RWPE1 (cell line): ENCODE measurements at regions of chr20 and their contacts with region 1.

Region 1: GRCh38 chr20:38221119-38221589 is 39.4 kb downstream of the KIAA1755 start:
- DNase-seq: peak; percentile 94
- H3K27ac ChIP-seq: no peak overlapping the region
- CTCF ChIP-seq: peak; percentile 99

Region 2: DNA sequence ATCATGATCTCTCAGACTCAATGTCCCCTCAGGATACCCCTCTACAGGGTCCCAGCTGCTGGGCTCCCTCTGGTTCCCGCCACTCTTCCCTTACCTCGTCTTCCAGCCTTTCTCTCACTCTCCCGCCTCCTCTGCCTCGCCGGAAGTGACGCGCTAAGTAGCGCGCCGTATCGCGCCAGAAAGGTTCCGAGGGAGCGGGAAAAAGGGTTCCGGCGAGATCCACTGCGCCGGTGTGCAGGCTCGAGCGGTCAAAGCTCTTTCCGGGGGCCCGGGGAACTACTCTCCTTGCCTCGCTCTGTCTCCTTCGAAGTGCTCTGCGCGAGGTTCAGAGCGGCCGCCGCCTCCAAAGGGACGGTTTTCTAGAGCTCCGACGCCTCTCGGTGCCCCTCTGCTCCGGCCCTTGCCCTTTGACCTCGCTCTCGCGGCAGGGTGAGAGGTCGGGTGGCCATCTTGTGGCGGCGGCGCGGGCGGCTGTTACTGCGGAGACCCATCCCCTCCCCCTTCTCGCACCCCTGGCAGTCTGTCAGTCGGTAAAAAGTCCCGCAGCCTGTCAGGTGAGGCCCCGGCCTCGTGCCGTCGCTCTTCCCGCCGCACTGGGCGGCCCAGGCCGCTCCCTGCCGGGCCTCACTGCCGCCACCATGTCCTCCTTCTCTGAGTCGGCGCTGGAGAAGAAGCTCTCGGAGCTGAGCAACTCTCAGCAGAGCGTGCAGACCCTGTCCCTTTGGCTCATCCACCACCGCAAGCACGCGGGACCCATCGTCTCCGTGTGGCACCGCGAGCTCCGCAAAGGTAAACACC is 187.6 kb before region 1 on chr20 and contains the starts of genes RPRD1B and TTI1:
- CTCF ChIA-PET with region 1: interaction called, 12 read pairs
- POLR2A ChIA-PET with region 1: no interaction called
- DNase-seq: peak; percentile 95
- H3K27ac ChIP-seq: peak within 1 kb of the TSS; percentile 86
- CTCF ChIP-seq: no peak

Region 3: DNA sequence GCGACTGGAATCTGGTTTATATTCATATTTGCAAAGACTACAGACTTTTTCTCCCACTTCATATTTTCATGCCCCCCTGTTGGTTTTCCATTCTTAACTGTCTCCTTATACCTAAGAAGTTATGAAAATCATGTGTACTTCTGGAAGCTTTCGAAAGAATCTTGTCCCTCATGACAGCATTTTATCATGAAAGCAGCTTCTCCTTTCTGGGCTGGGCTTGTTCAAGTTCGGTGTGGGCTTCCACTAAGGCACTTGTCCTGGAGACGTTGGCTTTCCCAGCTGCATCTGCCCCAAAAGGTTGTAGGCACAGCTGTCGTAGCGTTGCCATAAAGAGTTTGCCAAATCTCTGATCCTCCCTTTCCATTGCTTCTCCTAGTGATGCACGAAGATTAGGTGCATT is 131.1 kb before region 1 on chr20:
- CTCF ChIA-PET with region 1: interaction called, 10 read pairs
- POLR2A ChIA-PET with region 1: no interaction called
- DNase-seq: no peak
- H3K27ac ChIP-seq: no peak overlapping the region
- CTCF ChIP-seq: no peak

Region 4: DNA sequence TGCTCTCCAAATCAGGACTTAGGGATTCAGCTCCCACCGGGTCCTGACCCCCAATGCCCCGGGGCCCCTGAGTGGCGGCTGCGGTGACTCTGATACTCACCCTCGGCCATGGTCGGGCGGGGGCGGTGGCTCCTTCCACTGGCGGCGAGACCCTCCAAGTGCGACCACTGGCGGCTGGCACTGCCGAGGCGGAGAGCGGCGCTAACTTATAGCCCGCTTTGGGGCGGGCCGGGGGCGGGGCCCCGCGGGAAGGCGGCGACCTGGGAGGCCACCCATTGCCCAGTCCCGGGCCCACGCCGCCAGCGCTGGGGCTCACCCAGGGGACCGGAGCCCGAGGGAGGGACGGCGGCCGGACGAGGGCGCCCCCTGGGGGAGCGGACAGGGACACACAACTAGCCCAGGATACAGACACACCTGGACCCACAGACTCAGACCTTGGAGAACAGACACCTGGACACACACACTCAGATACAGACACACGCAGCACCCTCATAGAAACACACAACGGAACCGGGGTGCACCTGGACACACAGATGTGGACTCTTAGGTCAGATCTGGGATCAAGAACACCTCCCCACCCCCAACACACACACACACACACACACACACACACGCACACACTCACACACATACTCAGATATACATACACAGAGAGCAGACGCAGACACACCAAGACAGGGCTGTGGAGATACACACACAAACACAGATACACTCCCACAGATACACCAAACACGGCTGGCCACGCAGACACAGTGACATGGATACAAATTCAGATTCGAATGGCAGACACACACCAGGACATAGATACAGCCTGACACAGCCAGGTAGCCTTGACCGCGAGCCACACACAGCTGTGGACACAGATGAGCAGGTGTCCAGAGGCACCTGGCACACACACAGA is 55.8 kb before region 1 on chr20 and contains the start of gene TGM2:
- CTCF ChIA-PET with region 1: interaction called, 47 read pairs
- POLR2A ChIA-PET with region 1: no interaction called
- DNase-seq: peak; percentile 71
- H3K27ac ChIP-seq: peak within 1 kb of the TSS; percentile 86; the same call in 1 of the 2 replicates
- CTCF ChIP-seq: peak; percentile 89

Region 5: GRCh38 chr20:38210741-38211140 is 10.4 kb before region 1 on chr20:
- CTCF ChIA-PET with region 1: interaction called, 12 read pairs
- POLR2A ChIA-PET with region 1: no interaction called
- DNase-seq: peak; percentile 70
- H3K27ac ChIP-seq: peak overlapping the region; percentile 49
- CTCF ChIP-seq: no peak